ENCODE measurements at regions of chr18 and their contacts with region 1.

Region 1: DNA sequence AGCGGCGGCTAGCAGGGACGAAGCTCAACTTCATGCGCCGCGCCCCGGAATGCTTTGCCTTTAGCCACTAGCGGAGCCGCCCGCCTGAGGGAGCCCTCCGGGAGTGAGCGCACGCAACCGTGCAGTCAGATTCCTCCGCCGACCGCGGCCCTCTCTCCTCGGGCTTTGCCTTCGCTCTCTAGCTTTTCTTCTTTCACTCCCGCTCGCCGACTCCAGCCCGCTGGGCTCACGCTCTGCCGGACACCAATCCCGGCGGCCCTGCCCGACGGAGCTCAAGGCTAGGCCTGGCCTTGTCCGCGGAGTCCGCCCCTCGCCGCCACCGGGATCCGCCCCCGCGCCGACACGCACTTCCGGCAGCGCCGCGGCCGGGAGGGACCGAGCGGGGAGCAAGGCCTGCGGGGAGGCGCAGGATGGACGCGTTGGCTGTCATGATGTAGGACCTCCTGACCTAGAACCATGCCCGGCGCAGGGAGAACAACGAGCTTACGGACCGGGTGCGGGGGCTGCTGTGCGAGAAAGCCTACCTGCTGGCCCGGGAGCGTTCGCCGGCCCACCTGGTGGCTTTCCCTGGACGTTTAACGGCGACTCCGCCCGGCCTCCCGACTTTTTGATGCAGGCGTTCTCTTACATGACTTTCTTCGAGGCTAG is 40.8 kb upstream of the AKAIN1 start:
- DNase-seq: peak; percentile 86
- H3K4me3 Mint-ChIP-seq: peak overlapping the region; percentile 91
- H3K27ac Mint-ChIP-seq: peak overlapping the region; percentile 97
- H3K4me1 Mint-ChIP-seq: peaks cover 41% of the 10 kb centered on the region
- H3K27me3 Mint-ChIP-seq: no peaks in the 10 kb centered on the region

Region 2: GRCh38 chr18:5295981-5296705 is 58.3 kb after region 1 on chr18:
- CTCF ChIA-PET with region 1: interaction called, 19 read pairs
- POLR2A ChIA-PET with region 1: interaction called, 11 read pairs
- DNase-seq: peak; percentile 93
- H3K4me3 Mint-ChIP-seq: peak overlapping the region; percentile 88
- H3K27ac Mint-ChIP-seq: peak overlapping the region; percentile 97
- H3K4me1 Mint-ChIP-seq: peaks cover 37% of the 10 kb centered on the region
- H3K27me3 Mint-ChIP-seq: peaks cover 15% of the 10 kb centered on the region

Region 3: GRCh38 chr18:5334456-5335075 is 96.7 kb after region 1 on chr18:
- CTCF ChIA-PET with region 1: no interaction called
- POLR2A ChIA-PET with region 1: no interaction called
- DNase-seq: no peak
- H3K4me3 Mint-ChIP-seq: no peak overlapping the region
- H3K27ac Mint-ChIP-seq: no peak overlapping the region
- H3K4me1 Mint-ChIP-seq: no peaks in the 10 kb centered on the region
- H3K27me3 Mint-ChIP-seq: no peaks in the 10 kb centered on the region

Measured in activated CD4-positive, alpha-beta T cell treated with anti-CD3 and anti-CD28 coated beads, Interleukin-2, amount 10 ng/mL, durations not matched to agents 7 days and 5 days (primary cell).